Mammary epithelial cell (primary cell): ENCODE measurements at regions of chr22 and their contacts with region 1.

Region 1: GRCh38 chr22:39244496-39245129 is at the start of gene PDGFB:
- DNase-seq: peak; percentile 44
- H3K4me3 ChIP-seq: peak within 1 kb of the TSS; percentile 64 to 74 (median 70)
- H3K27ac ChIP-seq: no peak within 1 kb of the TSS
- H3K4me1 ChIP-seq: peaks cover 30% of the 10 kb centered on the region
- H3K27me3 ChIP-seq: no peaks in the 10 kb centered on the region
- CTCF ChIP-seq: no peak
- total RNA-seq, gene PDGFB: 11.2 to 29.2 TPM

Region 2: DNA sequence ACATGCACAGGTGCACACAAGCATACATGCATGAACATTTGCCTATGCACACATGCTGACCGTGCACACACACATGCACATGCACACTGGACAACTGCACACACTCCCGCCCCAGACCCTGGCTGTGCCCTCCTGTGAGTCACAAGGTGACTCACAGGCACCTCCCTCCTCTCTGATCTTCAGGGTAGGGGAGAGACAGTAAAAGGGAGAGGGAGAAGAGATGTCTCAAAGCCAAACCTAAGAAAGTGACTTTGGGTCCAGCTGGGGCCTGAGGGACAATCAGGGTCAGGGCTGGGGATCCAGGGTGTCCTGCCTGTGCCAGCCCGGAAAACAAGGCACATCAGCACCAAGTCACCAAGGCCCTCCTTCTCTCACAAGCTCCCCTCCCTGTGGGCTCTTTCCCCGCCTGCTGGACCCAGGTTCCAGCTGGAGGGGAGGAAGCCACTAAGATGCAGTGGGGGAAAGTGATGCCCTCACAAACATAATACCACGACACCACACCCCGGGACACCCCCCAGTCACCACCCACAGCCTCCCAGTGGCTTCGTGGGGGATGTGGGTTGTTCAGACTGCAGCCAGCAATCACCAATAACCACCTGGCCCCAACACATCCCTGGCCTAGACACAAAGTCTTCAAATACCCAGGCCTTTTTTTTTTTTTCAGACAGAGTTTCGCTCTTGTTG is 39.1 kb before region 1 on chr22:
- CTCF ChIA-PET with region 1: no interaction called
- dilution Hi-C with region 1: no loop called
- in situ Hi-C with region 1: no loop called
- intact Hi-C with region 1: loop called (anchors 2 kb)
- DNase-seq: peak; percentile 78
- H3K4me3 ChIP-seq: no peak overlapping the region
- H3K27ac ChIP-seq: peak overlapping the region; percentile 51
- H3K4me1 ChIP-seq: peaks cover 35% of the 10 kb centered on the region
- H3K27me3 ChIP-seq: no peaks in the 10 kb centered on the region
- CTCF ChIP-seq: no peak